Breast epithelium (tissue), 4 donors: ENCODE measurements at regions of chr1 and their contacts with region 1.

Region 1: DNA sequence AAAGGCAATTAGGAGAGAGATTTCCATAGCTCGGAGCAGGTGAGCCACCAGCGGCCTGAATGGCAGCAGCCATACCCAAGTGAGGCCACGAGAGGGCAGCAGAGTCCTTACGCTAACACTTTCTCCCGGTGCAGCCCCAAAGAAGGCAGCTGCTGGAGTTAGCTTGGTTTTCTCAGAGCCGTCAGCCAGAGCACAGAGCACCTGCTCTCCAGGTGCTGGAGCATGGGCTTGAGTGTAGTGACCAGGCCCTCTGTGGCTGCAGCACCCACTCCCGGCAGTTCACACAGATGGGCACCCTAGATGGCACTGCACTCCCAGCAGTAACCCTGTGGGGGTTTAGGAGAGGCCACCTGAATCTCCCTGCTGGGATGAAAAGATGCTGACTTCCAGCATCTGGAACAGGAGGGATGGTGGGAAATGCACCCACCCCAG is 45.8 kb downstream of the TMCC2 start:
- DNase-seq: peak; percentile 82 to 91
- H3K4me3 ChIP-seq: no peak overlapping the region
- H3K27ac ChIP-seq: no peak overlapping the region
- H3K4me1 ChIP-seq: no peaks in the 10 kb centered on the region
- H3K27me3 ChIP-seq: no peaks in the 10 kb centered on the region
- CTCF ChIP-seq: peak; percentile 91 to 98 (median 96)
- POLR2A ChIP-seq: no peak

Region 2: GRCh38 chr1:205137901-205138300 is 135.7 kb before region 1 on chr1:
- intact Hi-C with region 1: no loop called
- DNase-seq: no peak
- H3K4me3 ChIP-seq: no peak overlapping the region
- H3K27ac ChIP-seq: no peak overlapping the region
- H3K4me1 ChIP-seq: no peaks in the 10 kb centered on the region
- H3K27me3 ChIP-seq: no peaks in the 10 kb centered on the region
- CTCF ChIP-seq: no peak
- POLR2A ChIP-seq: no peak

Region 3: DNA sequence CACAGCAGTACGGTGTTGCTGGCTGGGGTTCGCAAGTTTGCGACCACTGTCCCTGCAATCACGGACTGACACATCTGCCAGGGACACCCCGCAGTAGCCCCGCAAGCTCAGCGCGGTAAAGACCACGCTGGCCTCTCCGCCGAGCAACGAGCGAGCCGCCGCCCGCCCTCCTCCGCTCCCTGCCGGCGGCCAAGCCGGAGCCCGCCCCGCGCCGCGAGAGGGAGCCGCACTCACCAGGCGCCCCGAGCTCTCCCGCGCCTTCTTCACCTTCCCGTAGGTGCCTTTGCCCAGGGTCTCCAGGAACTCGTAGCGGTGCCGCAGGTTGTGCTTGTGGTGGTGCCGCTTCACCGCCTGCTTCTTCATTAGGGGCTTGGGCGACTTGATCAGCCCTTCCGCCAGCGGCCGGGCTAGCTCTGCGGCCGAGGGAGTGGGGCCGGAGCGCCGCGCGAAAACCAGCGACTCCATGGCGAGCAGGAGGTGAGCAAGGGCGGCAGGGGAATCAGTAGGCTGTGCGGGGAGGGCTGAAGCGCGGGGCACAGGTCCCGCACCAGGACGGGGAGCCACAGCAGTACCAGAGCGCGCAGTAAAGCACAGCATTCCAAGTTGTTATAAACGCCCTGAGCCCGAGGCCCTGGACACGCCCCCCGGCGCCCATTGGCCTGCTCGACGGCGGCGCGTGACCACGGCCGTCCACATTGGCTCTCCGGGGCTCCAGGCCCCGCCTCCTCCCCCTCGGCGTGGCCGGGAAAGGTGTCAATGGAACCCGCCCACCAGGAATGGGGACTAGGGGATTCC is 47.8 kb after region 1 on chr1 and contains the start of gene NUAK2:
- intact Hi-C with region 1: loop called (anchors 5 kb)
- DNase-seq: peak; percentile 79 to 83
- H3K4me3 ChIP-seq: peak within 1 kb of the TSS; percentile 68 to 80 (median 72)
- H3K27ac ChIP-seq: peak within 1 kb of the TSS; percentile 69 to 73
- H3K4me1 ChIP-seq: peaks cover 0 to 19% of the 10 kb centered on the region in 2 donors
- H3K27me3 ChIP-seq: peaks cover 0 to 3% of the 10 kb centered on the region in 2 donors
- CTCF ChIP-seq: peak in 2 of 3 donors; percentile 10 to 20
- POLR2A ChIP-seq: peak; percentile 24
- total RNA-seq, gene NUAK2: 0.98 to 2.2 (median 1.1) TPM